Sciatic nerve (tissue), 2 donors: ENCODE measurements at regions of chr9 and their contacts with region 1.

Region 1: DNA sequence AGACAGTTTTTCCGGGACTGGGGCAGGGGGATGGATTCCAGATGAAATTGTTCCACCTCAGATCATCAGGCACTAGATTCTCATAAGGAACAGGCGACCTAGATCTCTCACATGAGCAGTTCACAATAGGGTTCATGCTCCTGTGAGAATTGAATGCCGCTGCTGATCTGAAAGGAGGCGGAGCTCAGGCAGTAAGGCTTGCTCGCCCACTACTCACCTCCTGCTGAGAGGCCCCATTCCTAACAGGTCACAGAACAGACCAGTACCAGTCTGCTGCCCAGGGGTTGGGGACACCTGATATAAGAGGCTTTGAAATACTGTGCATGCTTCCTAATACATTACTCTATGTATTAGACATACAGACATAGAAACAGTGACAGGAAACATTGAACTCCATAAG is 41.1 kb downstream of the PTPRD start:
- DNase-seq: no peak
- ATAC-seq: no peak

Region 2: DNA sequence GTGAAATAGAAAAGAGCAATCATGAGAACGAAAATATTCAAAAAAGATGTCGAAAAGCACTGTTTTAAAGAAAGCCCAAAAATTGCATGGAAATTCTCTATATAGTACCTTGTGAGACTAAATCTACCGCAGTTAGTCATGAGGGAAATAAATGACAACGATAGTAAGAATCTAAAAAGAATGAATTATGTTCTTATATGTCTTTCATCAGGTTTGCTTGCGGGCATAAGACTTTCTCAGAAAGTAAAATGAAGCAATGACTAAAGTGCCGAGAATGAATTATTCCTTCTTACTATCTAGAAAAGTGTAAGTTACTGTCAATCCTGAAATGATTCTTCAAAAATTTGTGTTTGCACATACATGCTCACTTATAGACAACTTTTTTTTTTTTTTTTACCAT is 14.7 kb after region 1 on chr9:
- intact Hi-C with region 1: no loop called
- DNase-seq: no peak
- ATAC-seq: no peak

Region 3: DNA sequence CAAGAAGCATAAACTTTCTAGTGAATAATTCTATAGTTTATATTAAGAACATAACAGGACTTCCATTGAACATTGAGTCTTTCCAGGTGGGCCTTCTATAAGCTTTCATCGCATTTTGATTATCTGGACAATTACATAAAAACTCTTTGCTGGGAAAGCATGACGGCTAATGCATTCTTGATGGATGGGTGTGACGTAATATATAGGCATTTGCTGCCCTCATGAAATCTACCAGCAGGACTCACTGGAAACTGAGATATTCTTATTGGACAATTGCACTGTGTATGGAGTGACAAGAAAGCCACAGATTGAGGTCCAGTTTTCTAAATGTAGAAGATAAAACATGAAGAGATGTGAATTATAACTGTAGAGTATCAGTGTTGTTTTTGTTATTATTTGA is 26.1 kb after region 1 on chr9:
- intact Hi-C with region 1: loop called (anchors 1 kb)
- DNase-seq: no peak
- ATAC-seq: no peak